ENCODE measurements at regions of chr2 and their contacts with region 1.

Region 1: GRCh38 chr2:47767880-47768609 is 14.9 kb upstream of the MSH6 start:
- DNase-seq: peak; percentile 43
- ATAC-seq: peak; percentile 87
- H3K4me3 ChIP-seq: no peak overlapping the region; a peak in 1 of 4 replicates
- H3K27ac ChIP-seq: no peak overlapping the region
- H3K4me1 ChIP-seq: peaks cover 3 to 16% of the 10 kb centered on the region in 2 experiments; a peak in 2 of 4 replicates
- H3K27me3 ChIP-seq: no peaks in the 10 kb centered on the region
- CTCF ChIP-seq: peak; percentile 82 to 96 (median 95)
- POLR2A ChIP-seq: no peak
- RAD21 ChIP-seq: peak; percentile 99

Region 2: DNA sequence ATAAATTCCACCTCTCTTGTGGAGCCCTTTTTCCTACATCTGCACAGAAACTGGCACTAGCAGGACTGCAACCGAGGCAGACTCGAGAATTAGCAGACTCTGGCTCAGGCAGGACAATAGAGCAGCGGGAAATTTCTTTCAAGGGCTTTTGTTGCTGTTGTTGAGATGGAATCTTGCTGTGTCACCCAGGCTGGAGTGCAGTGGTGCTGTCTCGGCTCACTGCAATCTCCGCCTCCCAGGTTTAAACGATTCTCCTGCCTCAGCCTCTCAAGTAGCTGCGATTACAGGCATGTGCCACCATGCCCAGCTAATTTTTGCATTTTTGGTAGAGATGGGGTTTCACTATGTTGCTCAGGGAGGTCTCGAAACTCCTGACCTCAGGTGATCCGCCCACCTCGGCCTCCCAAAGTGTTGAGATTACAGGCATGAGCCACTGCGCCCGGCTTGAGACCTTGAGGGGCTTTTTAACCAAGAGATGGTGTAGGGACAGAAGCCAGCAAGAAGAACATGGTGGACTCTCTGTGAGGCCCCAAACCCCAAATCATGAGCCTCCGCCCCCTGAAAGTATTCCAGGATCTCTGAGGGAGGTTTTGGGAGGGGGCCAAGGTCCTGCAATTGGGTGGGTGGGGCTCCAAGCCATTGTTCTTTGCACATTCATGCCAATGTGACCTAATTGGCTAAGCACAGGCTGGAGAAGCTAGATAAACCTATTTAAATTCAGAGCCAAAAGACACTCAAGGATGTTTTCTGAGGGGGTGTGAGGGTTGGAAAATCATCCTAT is 433.5 kb before region 1 on chr2:
- CTCF ChIA-PET with region 1: interaction called, 41 read pairs
- POLR2A ChIA-PET with region 1: interaction called, 4 read pairs
- RAD21 ChIA-PET with region 1: interaction called, 3 to 9 read pairs
- intact Hi-C with region 1: loop called (anchors 1 kb)
- DNase-seq: no peak
- ATAC-seq: peak; percentile 33; the same call in 1 of the 2 replicates
- H3K4me3 ChIP-seq: no peak overlapping the region
- H3K27ac ChIP-seq: no peak overlapping the region
- H3K4me1 ChIP-seq: peaks cover 5 to 31% of the 10 kb centered on the region in 2 experiments
- H3K27me3 ChIP-seq: no peaks in the 10 kb centered on the region
- CTCF ChIP-seq: no peak
- POLR2A ChIP-seq: no peak
- RAD21 ChIP-seq: no peak

Region 3: GRCh38 chr2:47339745-47340541 is 428.1 kb before region 1 on chr2:
- CTCF ChIA-PET with region 1: interaction called, 41 read pairs
- POLR2A ChIA-PET with region 1: interaction called, 4 read pairs
- RAD21 ChIA-PET with region 1: interaction called, 3 to 9 read pairs
- intact Hi-C with region 1: loop called (anchors 1 kb)
- DNase-seq: peak; percentile 92
- ATAC-seq: peak; percentile 84
- H3K4me3 ChIP-seq: peak overlapping the region in 1 of 2 experiments; percentile 27; a peak in 2 of 4 replicates
- H3K27ac ChIP-seq: peak overlapping the region; percentile 84
- H3K4me1 ChIP-seq: peaks cover 34 to 66% of the 10 kb centered on the region in 2 experiments
- H3K27me3 ChIP-seq: no peaks in the 10 kb centered on the region
- CTCF ChIP-seq: no peak
- POLR2A ChIP-seq: no peak
- RAD21 ChIP-seq: peak; percentile 26; the same call in 1 of the 2 replicates

Region 4: DNA sequence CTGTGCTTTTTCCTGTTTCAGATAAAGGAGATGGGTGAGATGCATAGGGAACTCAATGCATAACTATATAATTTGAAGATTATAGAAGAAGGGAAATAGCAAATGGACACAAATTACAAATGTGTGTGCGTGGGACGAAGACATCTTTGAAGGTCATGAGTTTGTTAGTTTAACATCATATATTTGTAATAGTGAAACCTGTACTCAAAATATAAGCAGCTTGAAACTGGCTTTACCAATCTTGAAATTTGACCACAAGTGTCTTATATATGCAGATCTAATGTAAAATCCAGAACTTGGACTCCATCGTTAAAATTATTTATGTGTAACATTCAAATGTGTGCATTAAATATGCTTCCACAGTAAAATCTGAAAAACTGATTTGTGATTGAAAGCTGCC is 381.5 kb before region 1 on chr2:
- CTCF ChIA-PET with region 1: interaction called, 17 read pairs
- POLR2A ChIA-PET with region 1: no interaction called
- RAD21 ChIA-PET with region 1: interaction called in 1 of 2 experiments, 3 read pairs
- intact Hi-C with region 1: no loop called
- DNase-seq: no peak
- ATAC-seq: no peak
- H3K4me3 ChIP-seq: no peak overlapping the region
- H3K27ac ChIP-seq: no peak overlapping the region
- H3K4me1 ChIP-seq: no peaks in the 10 kb centered on the region
- H3K27me3 ChIP-seq: no peaks in the 10 kb centered on the region
- CTCF ChIP-seq: no peak
- POLR2A ChIP-seq: no peak
- RAD21 ChIP-seq: no peak

Region 5: GRCh38 chr2:47422560-47422959 is 345.5 kb before region 1 on chr2:
- CTCF ChIA-PET with region 1: interaction called, 11 read pairs
- POLR2A ChIA-PET with region 1: no interaction called
- RAD21 ChIA-PET with region 1: no interaction called
- intact Hi-C with region 1: no loop called
- DNase-seq: no peak
- ATAC-seq: peak; percentile 57; the same call in 1 of the 2 replicates
- H3K4me3 ChIP-seq: no peak overlapping the region
- H3K27ac ChIP-seq: no peak overlapping the region; the same call in 1 of the 2 replicates
- H3K4me1 ChIP-seq: peaks cover 11 to 23% of the 10 kb centered on the region in 2 experiments; a peak in 3 of 4 replicates
- H3K27me3 ChIP-seq: no peaks in the 10 kb centered on the region
- CTCF ChIP-seq: no peak
- POLR2A ChIP-seq: no peak
- RAD21 ChIP-seq: no peak

Region 6: DNA sequence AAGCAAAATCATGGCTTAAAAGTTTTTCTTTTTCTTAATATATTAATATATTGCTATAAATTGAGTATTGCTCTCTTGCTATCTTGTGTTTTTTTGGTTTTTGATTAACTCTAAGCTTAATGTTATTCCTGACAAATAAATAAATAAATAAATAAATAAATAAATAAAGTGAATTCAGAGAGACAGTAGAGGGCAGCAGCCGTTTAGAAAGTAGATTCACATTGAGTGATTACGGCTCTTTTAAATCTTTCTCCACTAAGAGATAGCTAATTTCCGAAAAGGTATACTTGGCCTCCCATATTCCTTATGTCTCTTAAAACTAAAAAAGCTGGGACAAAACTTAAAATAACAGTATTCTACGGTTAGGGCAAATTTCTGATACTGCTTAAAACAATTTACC is 330.8 kb before region 1 on chr2:
- CTCF ChIA-PET with region 1: interaction called, 64 read pairs
- POLR2A ChIA-PET with region 1: interaction called, 3 read pairs
- RAD21 ChIA-PET with region 1: interaction called, 8 to 10 read pairs
- intact Hi-C with region 1: loop called (anchors 1 kb)
- DNase-seq: no peak
- ATAC-seq: no peak
- H3K4me3 ChIP-seq: no peak overlapping the region
- H3K27ac ChIP-seq: no peak overlapping the region
- H3K4me1 ChIP-seq: no peaks in the 10 kb centered on the region
- H3K27me3 ChIP-seq: no peaks in the 10 kb centered on the region
- CTCF ChIP-seq: peak; percentile 16 to 52 (median 20); a peak in 1 of 6 replicates
- POLR2A ChIP-seq: no peak
- RAD21 ChIP-seq: peak; percentile 67

Measured in HCT116 (cell line).